ENCODE measurements at regions of chr18 and their contacts with region 1.

Region 1: GRCh38 chr18:13298262-13298661 is 79.7 kb downstream of the LDLRAD4 start:
- DNase-seq: no peak
- ATAC-seq: no peak
- H3K4me3 ChIP-seq: no peak overlapping the region
- H3K4me3 Mint-ChIP-seq: no peak overlapping the region
- H3K27ac ChIP-seq: no peak overlapping the region
- H3K27ac Mint-ChIP-seq: peak overlapping the region in 1 of 2 donors; percentile 36
- H3K4me1 ChIP-seq: peaks cover 5 to 23% of the 10 kb centered on the region in 2 experiments
- H3K4me1 Mint-ChIP-seq: peaks cover 22 to 34% (median 28%) of the 10 kb centered on the region in 3 donors
- H3K27me3 ChIP-seq: no peaks in the 10 kb centered on the region
- H3K27me3 Mint-ChIP-seq: peaks cover 0 to under 1% of the 10 kb centered on the region in 2 donors

Region 2: DNA sequence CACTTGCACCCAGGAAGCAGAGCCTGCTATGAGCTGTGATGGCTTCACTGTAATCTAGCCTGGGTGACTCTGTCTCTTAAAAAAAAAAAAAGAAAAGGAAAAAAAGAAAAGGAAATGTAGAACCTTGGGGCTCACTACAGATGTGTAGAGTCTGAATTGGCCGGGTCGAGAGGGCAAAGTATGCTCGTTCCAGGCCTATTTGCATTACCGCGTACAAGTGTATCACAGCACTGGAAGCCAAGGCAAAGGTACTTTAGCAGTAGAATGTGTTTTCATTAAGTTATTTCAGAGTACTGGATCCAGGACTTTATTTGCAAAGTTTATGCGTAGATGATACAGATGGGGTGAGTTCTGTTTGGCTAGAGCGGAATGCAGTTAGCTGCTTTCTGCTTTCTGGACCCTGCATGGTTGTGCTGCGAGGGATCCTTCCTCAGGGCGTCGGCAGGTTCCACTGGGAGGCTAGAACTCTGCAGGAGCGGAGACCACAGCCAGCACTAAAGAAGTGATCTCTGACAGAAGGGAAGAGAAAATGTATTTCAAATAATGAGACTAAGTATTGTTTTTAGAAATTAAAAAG is 27.9 kb before region 1 on chr18:
- CTCF ChIA-PET with region 1: no interaction called
- POLR2A ChIA-PET with region 1: interaction called in 1 of 2 experiments, 13 read pairs
- DNase-seq: peak in 1 of 35 experiments; percentile 17
- ATAC-seq: no peak
- H3K4me3 ChIP-seq: no peak overlapping the region
- H3K4me3 Mint-ChIP-seq: peak overlapping the region in 1 of 3 donors; percentile 0
- H3K27ac ChIP-seq: no peak overlapping the region
- H3K27ac Mint-ChIP-seq: no peak overlapping the region
- H3K4me1 ChIP-seq: peaks cover 37 to 65% of the 10 kb centered on the region in 2 experiments
- H3K4me1 Mint-ChIP-seq: peaks cover 79 to 85% (median 84%) of the 10 kb centered on the region in 3 donors
- H3K27me3 ChIP-seq: peaks cover 0 to 4% of the 10 kb centered on the region in 2 experiments
- H3K27me3 Mint-ChIP-seq: no peaks in the 10 kb centered on the region